Stomach (tissue), 19 donors: ENCODE measurements at regions of chr7 and their contacts with region 1.

Region 1: DNA sequence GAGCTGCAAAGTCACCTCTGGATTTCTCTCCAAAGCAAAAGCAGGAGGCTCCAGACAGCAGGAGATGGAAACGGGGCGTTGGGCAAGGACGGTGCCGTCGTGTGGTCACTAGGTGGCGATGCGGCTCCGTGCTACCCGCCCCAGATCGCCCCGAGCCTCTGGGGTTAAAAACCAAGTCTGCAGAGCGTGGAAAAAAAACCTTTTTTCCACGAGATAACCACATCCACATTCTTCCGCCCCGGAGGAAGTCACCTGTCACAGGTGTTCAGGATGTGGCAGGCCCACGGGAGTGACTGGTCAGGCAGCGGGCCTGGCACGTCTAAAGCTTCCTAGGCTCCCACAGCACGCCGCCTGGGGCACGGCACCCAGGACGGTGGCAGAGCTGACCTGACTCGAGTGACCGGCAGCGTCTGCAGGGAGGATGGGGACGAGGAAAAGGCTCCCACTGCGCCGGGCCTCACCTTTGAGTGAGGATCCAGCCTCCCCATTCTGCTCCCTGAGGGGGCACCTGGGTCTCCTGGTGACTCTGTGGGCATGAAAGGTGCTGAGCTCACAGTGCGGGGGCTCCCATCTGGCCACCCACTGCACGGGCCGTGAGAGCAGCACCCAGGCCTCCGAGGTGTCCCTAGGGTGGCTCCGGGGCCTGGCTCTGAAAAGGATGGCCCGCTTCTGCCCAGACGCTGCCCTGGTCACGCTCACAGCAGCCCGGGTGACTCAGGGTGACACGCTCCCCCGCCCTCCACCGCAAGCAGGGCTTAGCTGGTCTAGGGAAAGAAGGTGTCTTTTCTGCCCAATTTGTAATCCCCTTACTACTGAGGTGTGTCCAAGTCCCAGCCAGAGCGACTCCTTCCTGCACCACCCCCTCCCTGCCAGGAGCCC is 71.3 kb upstream of the TNRC18 start:
- DNase-seq: peak; percentile 77 to 92
- H3K4me3 ChIP-seq: peak overlapping the region; percentile 16 to 35 (median 31)
- H3K27ac ChIP-seq: peak overlapping the region; percentile 47 to 77 (median 61)
- H3K4me1 ChIP-seq: peaks cover 16 to 45% (median 37%) of the 10 kb centered on the region in 4 donors
- H3K27me3 ChIP-seq: no peaks in the 10 kb centered on the region
- CTCF ChIP-seq: peak in 5 of 7 experiments; percentile 86 to 95 (median 89)
- EP300 ChIP-seq: no peak
- POLR2A ChIP-seq: no peak

Region 2: GRCh38 chr7:4725014-4725849 is 769.7 kb before region 1 on chr7:
- intact Hi-C with region 1: no loop called
- DNase-seq: peak; percentile 83 to 91
- H3K4me3 ChIP-seq: peak overlapping the region; percentile 47 to 57 (median 52)
- H3K27ac ChIP-seq: peak overlapping the region; percentile 87 to 96 (median 93)
- H3K4me1 ChIP-seq: peaks cover 18 to 79% (median 52%) of the 10 kb centered on the region in 4 donors
- H3K27me3 ChIP-seq: no peaks in the 10 kb centered on the region
- CTCF ChIP-seq: no peak
- EP300 ChIP-seq: no peak
- POLR2A ChIP-seq: no peak

Region 3: GRCh38 chr7:5396999-5397663 is 97.8 kb before region 1 on chr7:
- intact Hi-C with region 1: no loop called
- DNase-seq: peak; percentile 89 to 90
- H3K4me3 ChIP-seq: peak overlapping the region; percentile 39 to 51 (median 48)
- H3K27ac ChIP-seq: peak overlapping the region; percentile 86 to 91 (median 90)
- H3K4me1 ChIP-seq: peaks cover 30 to 79% (median 54%) of the 10 kb centered on the region in 4 donors
- H3K27me3 ChIP-seq: no peaks in the 10 kb centered on the region
- CTCF ChIP-seq: no peak
- EP300 ChIP-seq: no peak
- POLR2A ChIP-seq: no peak

Region 4: DNA sequence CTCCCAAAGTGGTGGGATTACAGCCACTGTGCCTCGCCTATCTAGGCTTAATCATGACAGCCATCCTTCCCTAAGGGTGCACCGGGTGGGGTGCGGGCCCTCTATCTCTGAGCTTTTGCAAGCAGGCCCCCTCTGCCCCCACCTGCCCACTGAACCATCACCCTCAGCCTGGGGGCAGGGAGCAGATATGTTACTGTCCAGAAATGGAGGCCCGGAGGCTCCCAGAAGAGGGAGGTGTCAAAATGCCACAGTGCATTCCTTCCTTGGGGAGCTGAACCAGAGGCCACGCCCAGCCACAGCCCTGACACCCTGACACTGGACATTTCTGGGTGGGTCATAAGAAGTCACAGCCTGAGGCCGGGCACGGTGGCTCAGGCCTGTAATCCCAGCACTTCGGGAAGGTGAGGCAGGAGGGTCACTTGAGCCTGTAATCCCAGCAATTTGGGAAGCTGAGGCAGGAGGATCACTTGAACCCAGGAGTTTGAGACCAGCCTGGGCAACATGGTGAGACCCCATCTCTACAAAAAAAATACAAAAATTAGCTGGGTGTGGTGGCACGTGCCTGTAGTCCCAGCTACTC is 58.5 kb after region 1 on chr7:
- intact Hi-C with region 1: loop called (anchors 5 kb)
- DNase-seq: peak; percentile 38 to 56
- H3K4me3 ChIP-seq: no peak overlapping the region
- H3K27ac ChIP-seq: peak overlapping the region in 3 of 5 donors; percentile 39 to 99 (median 98)
- H3K4me1 ChIP-seq: peaks cover 37 to 60% (median 45%) of the 10 kb centered on the region in 4 donors
- H3K27me3 ChIP-seq: no peaks in the 10 kb centered on the region
- CTCF ChIP-seq: no peak
- EP300 ChIP-seq: no peak
- POLR2A ChIP-seq: no peak

Region 5: GRCh38 chr7:5665094-5666025 is 170.4 kb after region 1 on chr7:
- intact Hi-C with region 1: loop called (anchors 10 kb)
- DNase-seq: peak; percentile 70 to 94
- H3K4me3 ChIP-seq: no peak overlapping the region
- H3K27ac ChIP-seq: peak overlapping the region in 1 of 5 donors; percentile 49
- H3K4me1 ChIP-seq: peaks cover 7 to 65% (median 37%) of the 10 kb centered on the region in 4 donors
- H3K27me3 ChIP-seq: no peaks in the 10 kb centered on the region
- CTCF ChIP-seq: peak in 5 of 7 experiments; percentile 76 to 82 (median 79)
- EP300 ChIP-seq: no peak
- POLR2A ChIP-seq: no peak

Region 6: DNA sequence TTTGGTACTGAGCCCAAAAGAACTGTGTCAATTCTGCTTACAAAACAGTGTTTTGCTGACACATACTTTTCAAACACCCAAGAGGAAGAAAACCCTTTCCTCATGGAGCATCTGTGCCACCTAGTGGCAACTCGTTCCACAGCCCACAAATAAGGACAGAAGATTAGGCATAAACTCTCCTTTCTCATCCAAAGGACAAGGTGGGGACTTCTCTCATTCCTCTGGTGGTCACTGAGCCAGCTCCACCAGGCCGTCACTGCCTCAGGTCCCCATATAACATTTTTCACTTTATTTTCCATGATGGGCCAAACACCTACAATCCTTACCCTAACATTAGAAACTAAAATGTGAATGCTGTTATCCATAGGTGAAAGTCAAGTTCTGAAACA is 209.6 kb after region 1 on chr7:
- intact Hi-C with region 1: loop called (anchors 10 kb)
- DNase-seq: peak; percentile 81 to 94
- H3K4me3 ChIP-seq: no peak overlapping the region
- H3K27ac ChIP-seq: peak overlapping the region in 4 of 5 donors; percentile 52 to 94 (median 60)
- H3K4me1 ChIP-seq: peaks cover 8 to 51% (median 30%) of the 10 kb centered on the region in 4 donors
- H3K27me3 ChIP-seq: no peaks in the 10 kb centered on the region
- CTCF ChIP-seq: peak in 5 of 7 experiments; percentile 76 to 93 (median 84)
- EP300 ChIP-seq: no peak
- POLR2A ChIP-seq: no peak